ENCODE measurements at regions of chr4 and their contacts with region 1.

Region 1: GRCh38 chr4:139030614-139031235 is 15.1 kb downstream of the NOCT start:
- DNase-seq: peak; percentile 65
- H3K4me3 ChIP-seq: no peak overlapping the region
- H3K27ac ChIP-seq: no peak overlapping the region
- H3K27me3 ChIP-seq: no peaks in the 10 kb centered on the region
- CTCF ChIP-seq: peak; percentile 87

Region 2: GRCh38 chr4:138439143-138439581 is 591.6 kb before region 1 on chr4:
- CTCF ChIA-PET with region 1: no interaction called
- POLR2A ChIA-PET with region 1: no interaction called
- DNase-seq: no peak
- H3K4me3 ChIP-seq: no peak overlapping the region
- H3K27ac ChIP-seq: no peak overlapping the region
- H3K27me3 ChIP-seq: no peaks in the 10 kb centered on the region
- CTCF ChIP-seq: no peak

Region 3: DNA sequence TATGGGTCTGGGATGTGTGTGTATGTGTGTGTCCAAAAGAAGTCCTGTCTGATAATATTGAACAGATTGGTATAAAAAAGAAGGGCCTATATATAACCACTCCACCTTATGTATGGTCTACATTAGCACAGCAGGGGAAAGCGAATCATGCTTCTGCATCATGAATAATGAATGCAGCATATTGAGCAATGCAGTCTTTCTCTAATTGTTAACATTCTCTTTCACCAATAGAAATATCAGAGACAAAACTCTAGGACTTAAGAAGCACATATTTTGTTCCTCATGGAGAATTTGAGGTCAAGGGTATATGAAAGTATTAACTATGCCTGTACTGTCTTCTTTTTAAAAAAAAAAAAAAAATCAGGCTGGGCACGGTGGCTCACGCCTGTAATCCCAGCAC is 279.4 kb before region 1 on chr4:
- CTCF ChIA-PET with region 1: no interaction called
- POLR2A ChIA-PET with region 1: no interaction called
- DNase-seq: no peak
- H3K4me3 ChIP-seq: no peak overlapping the region
- H3K27ac ChIP-seq: no peak overlapping the region
- H3K27me3 ChIP-seq: no peaks in the 10 kb centered on the region
- CTCF ChIP-seq: no peak

Region 4: GRCh38 chr4:139015269-139015947 is 15.3 kb before region 1 on chr4 and contains the start of gene NOCT:
- CTCF ChIA-PET with region 1: interaction called, 82 read pairs
- POLR2A ChIA-PET with region 1: interaction called, 10 read pairs
- DNase-seq: peak; percentile 81
- H3K4me3 ChIP-seq: peak within 1 kb of the TSS; percentile 88
- H3K27ac ChIP-seq: peak within 1 kb of the TSS; percentile 98
- H3K27me3 ChIP-seq: no peaks in the 10 kb centered on the region
- CTCF ChIP-seq: no peak
- polyA plus RNA-seq, gene NOCT: 5.8 and 6.7 TPM in 2 replicates

Region 5: DNA sequence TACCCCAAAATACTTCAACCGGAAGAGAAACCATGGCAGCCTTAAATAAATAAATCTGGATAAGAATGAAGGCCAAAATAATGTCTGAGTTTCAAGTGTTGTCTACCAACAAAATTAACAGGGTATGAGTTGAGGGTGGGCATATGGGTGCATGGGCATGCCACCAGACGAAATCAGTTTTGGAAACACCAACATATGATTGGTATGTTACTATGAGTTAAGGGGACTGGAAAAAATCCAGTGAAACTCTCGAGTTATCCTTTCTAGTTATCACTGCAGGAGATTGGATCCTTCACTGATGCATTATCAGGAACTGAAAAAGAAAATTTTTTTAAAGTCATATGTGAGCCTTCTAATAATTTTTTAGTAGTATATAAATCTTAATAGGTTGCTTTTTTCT is 17.3 kb after region 1 on chr4:
- CTCF ChIA-PET with region 1: interaction called, 39 read pairs
- POLR2A ChIA-PET with region 1: interaction called, 4 read pairs
- DNase-seq: no peak
- H3K4me3 ChIP-seq: no peak overlapping the region
- H3K27ac ChIP-seq: no peak overlapping the region
- H3K27me3 ChIP-seq: no peaks in the 10 kb centered on the region
- CTCF ChIP-seq: no peak

Region 6: GRCh38 chr4:139083956-139084803 is 53.5 kb after region 1 on chr4:
- CTCF ChIA-PET with region 1: interaction called, 53 read pairs
- POLR2A ChIA-PET with region 1: interaction called, 6 read pairs
- DNase-seq: peak; percentile 72
- H3K4me3 ChIP-seq: peak overlapping the region; percentile 99
- H3K27ac ChIP-seq: peak overlapping the region; percentile 93
- H3K27me3 ChIP-seq: no peaks in the 10 kb centered on the region
- CTCF ChIP-seq: peak; percentile 17; the same call in 1 of the 2 replicates

Region 7: DNA sequence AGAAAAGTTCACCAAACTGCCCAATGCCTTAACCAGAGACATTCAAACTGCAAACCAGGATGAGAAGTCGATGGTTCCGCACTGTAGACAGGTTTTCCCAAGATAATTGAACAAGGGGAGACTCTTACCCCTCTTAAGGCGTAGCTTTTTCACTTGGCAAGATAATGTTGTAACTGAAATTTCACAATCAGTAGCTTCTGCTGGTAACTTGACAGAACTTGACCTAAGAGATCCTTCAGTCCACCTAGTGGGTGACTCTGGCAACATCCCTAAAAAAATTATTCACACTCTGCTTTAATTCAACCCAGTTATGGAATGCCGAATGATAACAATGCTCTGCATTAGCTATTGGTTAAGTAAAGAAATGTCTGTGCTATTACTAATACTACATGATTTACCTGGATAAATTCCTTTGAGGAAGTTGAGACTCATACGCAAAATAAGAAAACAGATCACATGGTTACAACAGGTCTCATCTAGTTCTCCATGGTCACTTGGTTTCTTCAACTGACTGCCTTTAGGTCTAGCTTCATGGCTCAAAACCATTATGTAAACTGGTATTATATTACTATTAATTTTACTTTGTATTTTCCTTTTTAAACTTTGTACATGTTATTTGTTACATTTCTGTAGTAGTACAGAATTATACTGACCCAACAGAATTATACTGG is 137.2 kb after region 1 on chr4:
- CTCF ChIA-PET with region 1: interaction called, 14 read pairs
- POLR2A ChIA-PET with region 1: no interaction called
- DNase-seq: no peak
- H3K4me3 ChIP-seq: no peak overlapping the region
- H3K27ac ChIP-seq: no peak overlapping the region
- H3K27me3 ChIP-seq: no peaks in the 10 kb centered on the region
- CTCF ChIP-seq: peak; percentile 58

Region 8: DNA sequence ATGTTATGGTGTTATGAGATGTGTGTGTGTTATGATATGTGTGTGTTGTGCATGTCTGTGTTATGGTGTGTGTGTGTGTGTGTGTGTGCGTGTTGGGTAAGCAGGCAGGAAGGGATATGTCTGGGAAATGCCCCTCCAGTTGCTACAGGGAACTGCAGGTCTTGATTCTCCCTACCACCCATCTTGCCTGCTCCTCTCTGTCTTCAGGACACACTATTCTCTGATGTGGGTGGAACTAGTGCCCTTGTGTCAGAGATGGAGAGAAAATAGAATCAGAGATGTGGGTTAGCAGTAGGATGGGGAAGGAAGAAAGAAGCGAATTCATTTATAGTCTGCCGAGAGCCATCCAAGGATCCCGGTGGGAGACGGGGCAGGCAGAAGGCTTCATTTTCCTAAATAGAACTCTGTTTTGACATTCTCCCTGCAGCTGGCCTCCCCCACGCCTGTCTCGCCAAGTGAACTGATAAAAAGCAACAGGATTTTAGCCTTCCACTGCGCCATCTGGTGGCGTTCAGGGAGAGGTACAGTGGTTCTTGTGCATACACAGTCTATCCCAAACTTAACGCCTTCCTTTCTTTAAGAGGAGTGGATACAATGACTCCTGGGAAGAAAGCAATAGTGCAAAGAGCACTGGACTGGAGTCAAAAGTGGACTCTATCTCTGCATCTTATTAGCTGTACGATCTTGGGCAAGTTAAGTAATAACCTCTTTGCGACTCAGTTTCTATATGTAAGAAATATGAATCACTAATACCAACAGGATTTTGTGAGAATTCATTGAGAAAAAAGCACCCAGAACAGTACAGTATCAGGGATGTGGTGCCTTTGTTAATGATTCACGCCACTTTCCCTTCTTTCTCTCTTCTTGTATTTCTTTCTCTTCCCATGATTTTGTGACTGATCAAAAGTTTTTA is 620.8 kb after region 1 on chr4:
- CTCF ChIA-PET with region 1: interaction called, 14 read pairs
- POLR2A ChIA-PET with region 1: no interaction called
- DNase-seq: peak; percentile 77
- H3K4me3 ChIP-seq: no peak overlapping the region
- H3K27ac ChIP-seq: no peak overlapping the region
- H3K27me3 ChIP-seq: no peaks in the 10 kb centered on the region
- CTCF ChIP-seq: peak; percentile 92